Endothelial cell of umbilical vein (primary cell): ENCODE measurements at regions of chr2 and their contacts with region 1.

Region 1: DNA sequence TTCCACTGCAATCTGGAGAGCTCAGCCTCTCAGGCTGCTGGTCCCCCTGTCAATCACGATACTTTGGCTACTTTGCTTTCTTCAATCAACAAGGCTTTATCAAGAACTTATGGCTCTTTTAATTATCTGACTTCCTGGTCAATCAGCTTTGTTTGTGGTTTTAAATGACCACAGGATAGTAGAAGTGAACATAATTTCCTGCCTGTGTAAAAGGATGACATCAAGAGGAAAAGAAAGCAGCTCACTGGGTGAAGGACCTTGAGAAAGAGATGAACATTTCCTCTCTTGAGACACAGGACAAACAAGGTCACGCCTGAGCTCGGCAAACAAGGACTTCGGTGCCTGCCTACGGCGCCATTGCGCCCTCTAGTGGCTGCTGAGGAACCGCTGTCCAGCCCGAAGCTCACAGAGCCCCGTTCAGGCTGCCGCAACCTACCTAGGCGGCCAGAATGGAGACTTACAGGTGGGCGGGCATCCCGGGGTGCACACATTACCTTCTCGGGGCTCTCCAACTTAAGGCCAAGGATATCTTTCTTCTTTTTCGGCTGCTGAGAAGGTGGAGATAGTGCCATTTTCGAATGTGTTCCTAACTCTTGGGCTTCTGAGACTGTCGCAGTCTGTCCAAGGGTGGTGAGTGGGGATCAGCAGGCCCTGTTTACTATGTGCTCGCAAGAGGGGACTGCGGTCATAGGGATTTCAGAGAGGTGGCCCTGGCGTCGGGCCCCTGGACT is 54.0 kb downstream of the IL1RL2 start:
- DNase-seq: peak; percentile 94
- H3K4me3 ChIP-seq: no peak overlapping the region
- H3K27ac ChIP-seq: peak overlapping the region; percentile 36
- H3K4me1 ChIP-seq: peaks cover 12% of the 10 kb centered on the region
- H3K27me3 ChIP-seq: no peaks in the 10 kb centered on the region
- CTCF ChIP-seq: peak; percentile 97
- POLR2A ChIP-seq: no peak

Region 2: GRCh38 chr2:101349893-101350662 is 890.7 kb before region 1 on chr2:
- CTCF ChIA-PET with region 1: interaction called, 10 read pairs
- POLR2A ChIA-PET with region 1: no interaction called
- dilution Hi-C with region 1: no loop called
- intact Hi-C with region 1: no loop called
- DNase-seq: no peak
- H3K4me3 ChIP-seq: no peak overlapping the region
- H3K27ac ChIP-seq: no peak overlapping the region
- H3K4me1 ChIP-seq: no peaks in the 10 kb centered on the region
- H3K27me3 ChIP-seq: no peaks in the 10 kb centered on the region
- CTCF ChIP-seq: peak; percentile 10 to 33
- POLR2A ChIP-seq: no peak

Region 3: GRCh38 chr2:102013206-102014040 is 227.4 kb before region 1 on chr2:
- CTCF ChIA-PET with region 1: interaction called, 172 read pairs
- POLR2A ChIA-PET with region 1: no interaction called
- dilution Hi-C with region 1: no loop called
- intact Hi-C with region 1: no loop called
- DNase-seq: no peak
- H3K4me3 ChIP-seq: no peak overlapping the region
- H3K27ac ChIP-seq: no peak overlapping the region
- H3K4me1 ChIP-seq: peaks cover 11% of the 10 kb centered on the region
- H3K27me3 ChIP-seq: no peaks in the 10 kb centered on the region
- CTCF ChIP-seq: no peak
- POLR2A ChIP-seq: no peak

Region 4: GRCh38 chr2:102072741-102073140 is 168.1 kb before region 1 on chr2:
- CTCF ChIA-PET with region 1: no interaction called
- POLR2A ChIA-PET with region 1: no interaction called
- dilution Hi-C with region 1: no loop called
- intact Hi-C with region 1: no loop called
- DNase-seq: no peak
- H3K4me3 ChIP-seq: no peak overlapping the region
- H3K27ac ChIP-seq: no peak overlapping the region
- H3K4me1 ChIP-seq: no peaks in the 10 kb centered on the region
- H3K27me3 ChIP-seq: no peaks in the 10 kb centered on the region
- CTCF ChIP-seq: no peak
- POLR2A ChIP-seq: no peak

Region 5: DNA sequence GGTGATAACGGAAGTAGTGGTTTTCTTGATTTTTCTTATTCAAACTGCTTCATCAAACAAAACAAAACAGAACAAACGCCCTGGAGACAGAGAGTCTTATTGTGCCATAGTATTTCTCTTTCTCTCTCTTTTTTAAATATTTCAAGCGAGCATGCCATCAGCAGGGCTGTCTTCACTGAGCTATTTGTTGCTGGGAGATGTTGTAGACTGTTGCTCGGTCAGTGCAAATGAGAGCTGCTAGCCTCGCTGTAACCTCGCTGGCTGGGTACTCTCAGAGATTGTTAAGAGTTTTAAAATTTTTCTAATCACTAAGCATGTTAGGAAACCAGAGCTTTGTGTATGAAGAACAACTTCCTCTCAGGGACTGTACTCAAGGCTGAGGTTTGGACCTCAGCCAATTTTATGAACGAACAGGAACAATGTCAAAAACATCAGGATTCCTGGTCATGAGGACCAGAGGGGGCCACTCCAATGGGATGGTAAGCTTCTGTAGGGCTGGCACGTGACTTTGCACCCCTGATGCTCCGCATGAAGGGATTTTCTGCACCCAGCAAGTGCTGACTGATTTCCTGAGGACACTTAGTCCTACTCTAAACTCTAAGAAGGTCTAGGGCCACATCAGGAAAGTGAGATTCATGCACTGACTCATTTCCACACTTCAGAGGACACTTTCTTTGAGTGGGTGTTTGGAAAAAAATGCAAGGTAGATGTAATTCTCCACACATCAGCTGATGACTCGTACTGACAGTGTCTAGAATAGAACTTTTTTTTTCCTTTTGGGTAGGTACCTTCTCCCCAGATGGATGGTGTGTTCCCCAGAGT is 158.0 kb before region 1 on chr2:
- CTCF ChIA-PET with region 1: interaction called, 11 read pairs
- POLR2A ChIA-PET with region 1: no interaction called
- dilution Hi-C with region 1: no loop called
- intact Hi-C with region 1: no loop called
- DNase-seq: peak; percentile 88
- H3K4me3 ChIP-seq: peak overlapping the region in 1 of 3 experiments; percentile 19
- H3K27ac ChIP-seq: peak overlapping the region; percentile 60
- H3K4me1 ChIP-seq: peaks cover 20% of the 10 kb centered on the region
- H3K27me3 ChIP-seq: no peaks in the 10 kb centered on the region
- CTCF ChIP-seq: no peak
- POLR2A ChIP-seq: no peak

Region 6: DNA sequence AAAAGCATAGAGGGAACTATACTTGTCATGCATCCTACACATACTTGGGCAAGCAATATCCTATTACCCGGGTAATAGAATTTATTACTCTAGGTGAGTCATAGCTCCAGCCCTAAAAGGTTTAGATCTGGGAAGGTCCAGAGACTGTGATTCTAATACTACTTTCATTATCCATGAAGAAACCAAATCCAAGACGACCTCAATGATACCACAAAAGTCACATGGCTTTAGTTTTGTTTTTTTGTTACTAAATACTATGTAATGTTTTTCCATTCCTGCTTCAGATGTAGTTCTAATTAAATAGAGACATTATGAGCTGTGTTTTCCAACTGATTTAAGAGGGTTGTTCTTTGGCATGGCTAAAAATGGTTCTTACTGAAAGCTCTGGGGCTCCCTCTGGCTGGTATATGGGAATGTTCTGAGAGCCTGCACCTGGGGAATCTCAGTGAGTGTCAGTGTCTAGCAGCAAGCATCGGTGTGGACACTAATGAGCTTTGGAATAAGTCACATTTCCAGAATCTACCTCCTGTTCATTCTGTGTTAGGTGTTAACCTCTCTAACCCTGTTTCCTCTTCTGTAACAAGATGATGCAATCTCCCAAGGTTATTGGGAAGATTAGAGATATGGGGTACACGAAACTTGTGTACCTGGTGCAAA is 74.5 kb before region 1 on chr2:
- CTCF ChIA-PET with region 1: interaction called, 38 read pairs
- POLR2A ChIA-PET with region 1: no interaction called
- dilution Hi-C with region 1: no loop called
- intact Hi-C with region 1: no loop called
- DNase-seq: peak; percentile 59
- H3K4me3 ChIP-seq: no peak overlapping the region
- H3K27ac ChIP-seq: no peak overlapping the region
- H3K4me1 ChIP-seq: no peaks in the 10 kb centered on the region
- H3K27me3 ChIP-seq: no peaks in the 10 kb centered on the region
- CTCF ChIP-seq: peak in 1 of 2 donors; percentile 46
- POLR2A ChIP-seq: no peak

Region 7: DNA sequence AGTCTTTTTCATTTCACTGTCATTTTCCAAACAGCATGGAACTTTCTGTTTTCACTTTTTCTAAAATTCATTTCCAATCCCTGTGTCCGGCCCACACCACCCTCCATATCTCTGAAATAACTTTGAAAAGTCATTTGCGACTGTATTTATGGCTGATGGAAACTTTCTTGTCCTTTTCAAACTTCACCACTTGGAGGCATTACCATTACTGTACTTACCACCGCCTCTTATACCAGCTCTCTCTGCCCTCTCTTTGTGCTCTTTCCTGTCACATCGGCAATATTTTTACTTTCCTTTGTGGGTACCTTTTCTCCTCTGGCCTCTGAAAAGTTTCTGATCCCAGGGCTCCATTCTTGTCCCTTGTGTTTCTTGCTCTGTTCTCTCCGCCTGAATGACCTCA is 31.0 kb after region 1 on chr2:
- CTCF ChIA-PET with region 1: interaction called, 14 read pairs
- POLR2A ChIA-PET with region 1: no interaction called
- dilution Hi-C with region 1: no loop called
- intact Hi-C with region 1: no loop called
- DNase-seq: peak; percentile 15
- H3K4me3 ChIP-seq: no peak overlapping the region
- H3K27ac ChIP-seq: no peak overlapping the region
- H3K4me1 ChIP-seq: peaks cover 7% of the 10 kb centered on the region
- H3K27me3 ChIP-seq: no peaks in the 10 kb centered on the region
- CTCF ChIP-seq: no peak
- POLR2A ChIP-seq: no peak

Region 8: DNA sequence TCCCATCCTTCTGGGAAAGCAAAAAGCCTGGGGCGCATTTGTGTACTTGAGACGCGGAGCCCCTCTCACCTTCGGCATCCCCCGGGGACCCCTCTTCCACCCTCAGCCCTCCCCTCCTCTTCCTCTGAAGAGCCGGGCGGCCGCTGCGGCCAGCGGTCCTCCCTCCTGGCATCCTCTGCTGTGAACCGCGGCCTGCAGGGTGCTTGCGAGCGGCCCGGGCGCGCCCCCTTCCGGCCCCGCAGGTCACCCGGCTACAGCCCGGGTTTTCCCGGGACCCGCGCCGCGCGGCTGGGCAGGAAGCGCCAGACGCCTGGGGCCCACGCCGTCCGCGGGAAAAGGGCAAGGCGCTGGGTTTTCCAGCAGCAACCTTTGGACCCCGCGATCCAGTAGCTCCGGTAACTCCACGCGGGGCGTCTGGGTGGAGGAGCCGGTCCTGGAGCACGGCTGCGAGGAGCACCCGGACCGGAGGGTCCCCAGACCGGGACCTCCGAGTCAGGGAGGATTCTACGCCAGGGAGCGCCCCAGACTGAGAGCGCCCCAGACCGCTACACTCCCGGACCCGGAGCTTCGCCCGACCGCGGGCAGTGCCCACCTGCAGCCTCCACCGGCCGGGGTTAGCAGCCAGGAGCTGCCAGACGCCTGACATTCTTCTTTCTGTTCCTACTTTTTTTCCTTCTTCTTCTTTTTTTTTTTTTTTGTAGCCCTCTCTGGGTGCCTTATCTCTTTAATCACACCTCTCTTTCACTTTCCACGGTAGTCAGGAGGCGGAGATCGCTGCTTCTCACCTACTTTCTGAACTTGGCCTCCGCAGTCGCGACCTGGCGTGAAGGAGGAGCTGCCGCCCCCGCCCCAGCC is 114.9 kb after region 1 on chr2 and contains the start of gene IL18R1:
- CTCF ChIA-PET with region 1: interaction called, 26 read pairs
- POLR2A ChIA-PET with region 1: no interaction called
- dilution Hi-C with region 1: no loop called
- intact Hi-C with region 1: no loop called
- DNase-seq: peak; percentile 71
- H3K4me3 ChIP-seq: peak within 1 kb of the TSS; percentile 70 to 88 (median 79)
- H3K27ac ChIP-seq: peak within 1 kb of the TSS; percentile 63
- H3K4me1 ChIP-seq: peaks cover 13% of the 10 kb centered on the region
- H3K27me3 ChIP-seq: no peaks in the 10 kb centered on the region
- CTCF ChIP-seq: peak; percentile 72 to 84
- POLR2A ChIP-seq: no peak
- total RNA-seq, gene IL18R1: 3.6 and 4.0 TPM in 2 replicates